Activated naive CD4-positive, alpha-beta T cell treated with anti-CD3 and anti-CD28 coated beads for 36 hours (primary cell): ENCODE measurements at regions of chr4 and their contacts with region 1.

Region 1: DNA sequence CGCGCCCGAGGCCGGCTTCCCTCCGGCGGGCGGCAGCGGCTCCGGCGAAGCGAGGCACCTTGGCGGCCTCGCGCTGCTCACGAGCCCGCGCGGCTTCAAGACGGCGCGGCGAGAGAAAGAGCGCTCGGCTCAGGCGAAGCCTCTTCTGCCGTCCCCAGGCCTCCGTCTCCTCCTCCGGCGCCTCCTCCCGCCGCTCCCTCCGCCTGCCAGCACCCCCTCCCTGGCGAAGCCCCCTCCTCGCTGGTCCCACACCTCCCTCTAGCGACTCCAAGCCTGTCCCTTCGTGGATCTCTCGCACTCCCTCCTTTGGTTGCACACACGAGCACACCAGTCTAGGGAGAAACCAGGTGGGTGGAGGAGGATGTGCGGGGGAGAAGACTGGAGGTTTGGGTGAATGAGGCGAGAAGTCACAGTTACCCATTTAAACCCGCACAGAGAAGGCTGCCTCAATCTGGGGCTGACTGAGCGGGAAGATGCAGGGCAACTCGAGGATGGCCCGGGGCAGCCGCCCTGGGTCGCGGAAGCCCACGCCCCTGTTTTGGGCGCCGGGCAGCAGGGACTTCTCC is at the start of gene CAMK2D:
- DNase-seq: peak; percentile 96
- H3K4me3 Mint-ChIP-seq: peak within 1 kb of the TSS; percentile 95
- H3K27ac Mint-ChIP-seq: peak within 1 kb of the TSS; percentile 99
- H3K4me1 Mint-ChIP-seq: peaks cover 37% of the 10 kb centered on the region
- H3K27me3 Mint-ChIP-seq: no peaks in the 10 kb centered on the region
- total RNA-seq, gene CAMK2D: 75.7 to 78.3 TPM

Region 2: DNA sequence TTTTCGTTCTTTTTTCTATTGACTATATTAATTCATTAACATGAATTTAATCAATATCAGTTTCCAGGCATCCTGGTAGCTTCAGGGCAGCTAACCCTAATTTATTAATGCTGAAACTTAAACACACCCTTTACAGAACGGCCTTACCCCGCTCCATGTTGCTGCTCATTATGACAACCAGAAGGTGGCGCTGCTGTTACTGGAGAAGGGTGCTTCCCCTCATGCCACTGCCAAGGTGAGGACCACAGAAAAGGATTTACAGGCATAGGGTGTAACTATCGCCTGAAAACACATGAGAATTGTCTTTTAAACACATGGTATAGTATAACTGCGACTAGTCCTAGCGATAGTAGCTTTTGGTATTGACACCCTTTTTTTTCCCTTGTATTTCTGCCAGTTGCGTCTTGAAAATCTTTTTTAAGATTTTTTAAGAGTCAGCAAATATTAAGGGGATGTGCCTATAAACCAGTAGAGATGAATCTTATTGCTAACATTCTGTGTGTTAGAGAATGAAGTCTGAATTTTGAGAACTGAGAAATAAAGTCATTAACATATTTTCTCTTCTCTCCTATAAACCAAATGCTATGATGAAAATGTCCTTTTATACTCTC is 483.3 kb before region 1 on chr4:
- CTCF ChIA-PET with region 1: no interaction called
- intact Hi-C with region 1: loop called (anchors 1 kb)
- DNase-seq: peak; percentile 88
- H3K4me3 Mint-ChIP-seq: no peak overlapping the region
- H3K27ac Mint-ChIP-seq: no peak overlapping the region
- H3K4me1 Mint-ChIP-seq: no peaks in the 10 kb centered on the region
- H3K27me3 Mint-ChIP-seq: peaks cover 15% of the 10 kb centered on the region

Region 3: GRCh38 chr4:113446019-113446418 is 315.7 kb before region 1 on chr4:
- CTCF ChIA-PET with region 1: no interaction called
- intact Hi-C with region 1: loop called (anchors 1 kb)
- DNase-seq: no peak
- H3K4me3 Mint-ChIP-seq: no peak overlapping the region
- H3K27ac Mint-ChIP-seq: peak overlapping the region; percentile 66
- H3K4me1 Mint-ChIP-seq: peaks cover 27% of the 10 kb centered on the region
- H3K27me3 Mint-ChIP-seq: no peaks in the 10 kb centered on the region

Region 4: GRCh38 chr4:113547487-113548042 is 214.1 kb before region 1 on chr4:
- CTCF ChIA-PET with region 1: interaction called, 4 read pairs
- intact Hi-C with region 1: loop called (anchors 1 kb)
- DNase-seq: peak; percentile 97
- H3K4me3 Mint-ChIP-seq: no peak overlapping the region
- H3K27ac Mint-ChIP-seq: peak overlapping the region; percentile 8
- H3K4me1 Mint-ChIP-seq: peaks cover 17% of the 10 kb centered on the region
- H3K27me3 Mint-ChIP-seq: no peaks in the 10 kb centered on the region

Region 5: DNA sequence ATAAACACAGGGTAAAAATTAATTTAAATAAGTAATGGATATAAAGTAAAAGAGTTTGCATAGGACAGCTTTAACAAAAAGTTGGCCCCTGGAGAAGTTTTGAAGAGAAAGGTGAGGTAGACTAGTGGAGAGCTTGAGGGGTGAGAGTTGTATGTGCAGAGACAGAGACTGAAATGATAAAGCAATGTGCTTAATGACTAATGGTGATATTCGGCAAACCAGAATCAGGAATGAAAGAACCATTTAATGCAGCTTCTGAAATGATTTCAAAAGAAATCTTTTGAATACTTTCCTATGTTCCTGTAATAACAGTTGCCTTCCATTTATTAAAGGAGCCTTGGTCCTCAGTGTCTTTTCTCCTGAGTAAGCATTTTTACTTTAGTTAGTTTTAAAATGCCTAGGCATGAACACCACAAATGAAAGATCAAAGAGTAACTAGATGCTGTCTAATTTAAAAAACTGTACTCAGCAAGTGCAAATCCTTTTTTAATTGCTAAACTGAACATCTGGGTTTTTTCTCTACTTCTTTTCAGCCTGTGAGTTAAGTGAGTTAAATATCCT is 28.7 kb before region 1 on chr4:
- CTCF ChIA-PET with region 1: interaction called, 3 read pairs
- intact Hi-C with region 1: loop called (anchors 1 kb)
- DNase-seq: no peak
- H3K4me3 Mint-ChIP-seq: no peak overlapping the region
- H3K27ac Mint-ChIP-seq: peak overlapping the region; percentile 59
- H3K4me1 Mint-ChIP-seq: peaks cover 73% of the 10 kb centered on the region
- H3K27me3 Mint-ChIP-seq: no peaks in the 10 kb centered on the region

Region 6: GRCh38 chr4:114386637-114387233 is 625.0 kb after region 1 on chr4:
- CTCF ChIA-PET with region 1: no interaction called
- intact Hi-C with region 1: loop called (anchors 5 kb)
- DNase-seq: peak; percentile 7
- H3K4me3 Mint-ChIP-seq: no peak overlapping the region
- H3K27ac Mint-ChIP-seq: no peak overlapping the region
- H3K4me1 Mint-ChIP-seq: no peaks in the 10 kb centered on the region
- H3K27me3 Mint-ChIP-seq: peaks cover 4% of the 10 kb centered on the region